RWPE1 (cell line): ENCODE measurements at regions of chr4 and their contacts with region 1.

Region 1: DNA sequence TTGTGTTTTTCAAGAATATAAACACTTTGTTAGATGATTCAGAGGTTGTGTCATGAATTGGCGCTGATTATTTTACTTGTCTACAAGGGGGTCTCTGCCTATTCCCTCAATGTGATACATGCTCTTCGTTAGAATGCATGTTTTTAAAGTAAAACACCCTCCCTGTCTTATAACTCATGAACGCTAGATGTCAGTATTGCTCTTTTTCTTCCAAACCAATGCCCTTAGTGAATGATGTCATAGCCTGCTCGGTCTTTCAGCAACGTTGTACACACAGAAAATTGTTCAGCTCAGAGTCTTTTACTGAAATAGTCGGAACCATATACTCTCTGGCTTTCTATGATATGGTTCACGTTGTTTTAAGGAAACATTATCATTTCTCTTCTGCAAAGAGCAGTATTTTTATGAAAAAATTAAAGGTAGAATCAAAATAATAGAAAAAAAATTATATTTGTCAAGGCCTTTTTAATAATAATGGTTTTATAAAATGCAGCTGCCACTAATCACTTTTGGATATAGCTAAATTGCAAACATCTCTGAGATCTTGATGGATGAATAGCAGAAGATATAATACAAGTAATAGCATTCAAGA is 292.9 kb downstream of the TLL1 start:
- DNase-seq: peak; percentile 65
- H3K27ac ChIP-seq: no peak overlapping the region
- CTCF ChIP-seq: peak; percentile 82

Region 2: DNA sequence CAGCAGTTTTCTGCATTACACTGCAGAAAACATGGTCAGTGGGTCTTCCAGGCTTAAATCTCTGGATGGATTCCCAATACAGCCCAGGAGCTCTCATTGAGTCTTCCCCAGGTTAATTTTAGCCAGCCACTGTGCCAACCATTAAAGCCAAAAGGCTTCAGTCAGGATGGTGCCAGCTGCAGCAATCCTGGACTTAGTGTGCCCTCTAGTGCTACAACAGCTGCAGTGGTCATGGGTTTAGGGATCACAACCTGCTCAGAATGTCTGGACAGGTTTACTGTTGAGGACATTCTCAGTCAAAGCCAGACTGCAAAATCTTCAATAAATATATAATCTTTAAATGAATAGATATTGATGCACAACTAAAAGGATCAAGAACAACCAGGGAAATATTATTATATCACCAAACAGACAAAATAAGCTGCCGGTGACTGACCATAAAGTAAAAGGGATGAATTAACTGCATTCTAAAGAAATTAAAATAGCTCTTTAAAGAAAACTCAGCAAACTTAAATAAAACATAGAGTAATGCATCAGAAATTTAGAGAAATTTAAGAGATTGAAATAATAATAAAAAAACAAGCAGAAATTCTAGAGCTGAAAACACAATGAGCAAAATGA is 428.5 kb after region 1 on chr4:
- CTCF ChIA-PET with region 1: interaction called, 13 read pairs
- POLR2A ChIA-PET with region 1: no interaction called
- DNase-seq: peak; percentile 62
- H3K27ac ChIP-seq: no peak overlapping the region
- CTCF ChIP-seq: peak; percentile 48